ENCODE measurements at regions of chr7 and their contacts with region 1.

Region 1: DNA sequence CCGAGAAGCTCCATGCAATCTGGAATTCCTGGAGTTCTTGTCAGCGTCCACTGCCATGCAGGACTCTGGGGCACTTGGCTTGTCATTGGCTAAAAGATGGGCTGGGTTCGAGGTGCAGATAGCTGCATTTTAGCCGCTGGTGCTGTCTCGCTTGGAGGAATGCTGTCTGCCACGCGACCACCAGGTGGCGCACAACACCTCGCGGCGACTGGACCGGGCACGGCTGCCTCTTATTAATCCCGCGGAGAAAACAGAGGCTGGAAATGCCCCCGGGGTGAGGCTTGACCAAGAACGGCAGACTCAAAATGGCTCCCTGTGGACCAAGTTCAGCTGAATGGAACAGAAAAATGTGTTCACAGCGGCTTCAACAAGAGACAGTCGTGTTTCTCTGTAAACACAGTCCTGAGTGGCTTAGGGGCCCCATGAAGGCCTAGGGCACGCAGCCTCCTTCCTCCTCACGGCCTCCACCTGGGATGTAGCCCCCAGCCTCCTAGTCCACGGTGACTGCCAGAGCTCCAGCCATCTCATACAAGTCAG is 46.2 kb downstream of the AOC1 start:
- DNase-seq: peak; percentile 90
- H3K4me3 ChIP-seq: no peak overlapping the region
- H3K27ac ChIP-seq: peak overlapping the region in 1 of 2 experiments; percentile 34; a peak in 1 of 4 replicates
- H3K4me1 ChIP-seq: peaks cover 2 to 48% of the 10 kb centered on the region in 2 experiments; a peak in 2 of 4 replicates
- H3K27me3 ChIP-seq: no peaks in the 10 kb centered on the region
- CTCF ChIP-seq: peak; percentile 99
- EP300 ChIP-seq: no peak
- RAD21 ChIP-seq: peak; percentile 98

Region 2: DNA sequence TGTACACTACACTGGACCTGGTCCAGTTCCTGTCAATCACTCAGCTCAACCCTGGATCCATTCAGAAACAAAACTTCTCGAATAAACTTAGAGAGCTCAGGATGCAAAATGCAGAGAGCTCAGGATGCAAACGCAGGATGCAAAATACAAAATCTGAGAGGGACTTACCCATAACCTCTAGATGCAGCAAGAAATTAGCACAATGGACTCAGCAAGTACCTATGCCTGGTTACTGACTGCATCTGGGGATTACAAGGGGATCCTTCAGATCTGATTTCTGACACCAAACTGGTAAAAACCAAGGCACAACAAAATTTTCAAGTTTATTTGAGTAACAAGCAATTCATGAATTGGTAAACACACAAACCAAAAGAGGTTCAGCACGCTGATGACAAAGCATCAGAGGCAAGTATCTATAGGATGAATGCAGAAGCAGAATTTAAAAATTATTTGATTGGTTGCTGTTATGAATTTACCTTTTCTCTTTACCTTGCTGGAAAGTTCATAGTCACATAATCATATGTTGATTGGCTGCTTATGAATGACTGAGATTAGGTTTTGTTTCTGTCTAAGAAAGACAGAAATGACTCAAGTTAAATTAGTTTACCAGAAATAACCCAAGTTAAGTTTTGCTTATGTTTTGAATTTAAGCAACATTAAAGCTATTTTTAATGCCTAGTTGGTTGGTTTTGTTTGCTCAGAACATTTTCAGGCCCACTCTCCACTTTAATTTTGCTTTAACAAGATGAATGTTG is 277.7 kb before region 1 on chr7:
- CTCF ChIA-PET with region 1: no interaction called
- POLR2A ChIA-PET with region 1: no interaction called
- DNase-seq: no peak
- H3K4me3 ChIP-seq: no peak overlapping the region
- H3K27ac ChIP-seq: no peak overlapping the region
- H3K4me1 ChIP-seq: no peaks in the 10 kb centered on the region
- H3K27me3 ChIP-seq: 0 out of 2 replicates have a peak, but pooled peaks cover 11% of the 10 kb centered on the region
- CTCF ChIP-seq: no peak
- EP300 ChIP-seq: no peak
- RAD21 ChIP-seq: no peak

Region 3: GRCh38 chr7:150778738-150779301 is 119.7 kb before region 1 on chr7:
- CTCF ChIA-PET with region 1: interaction called, 33 read pairs
- POLR2A ChIA-PET with region 1: no interaction called
- DNase-seq: peak; percentile 78
- H3K4me3 ChIP-seq: no peak overlapping the region; a peak in 1 of 4 replicates
- H3K27ac ChIP-seq: 0 out of 4 replicates have a peak overlapping the region, but pooled peaks of 1 of the 2 experiments have one; percentile 7
- H3K4me1 ChIP-seq: peaks cover 0 to 6% of the 10 kb centered on the region in 2 experiments; a peak in 2 of 4 replicates
- H3K27me3 ChIP-seq: no peaks in the 10 kb centered on the region; the same call in 1 of the 2 replicates
- CTCF ChIP-seq: peak; percentile 99
- EP300 ChIP-seq: no peak
- RAD21 ChIP-seq: peak; percentile 100

Region 4: GRCh38 chr7:150854066-150855000 is 44.2 kb before region 1 on chr7:
- CTCF ChIA-PET with region 1: interaction called, 11 read pairs
- POLR2A ChIA-PET with region 1: no interaction called
- DNase-seq: no peak
- H3K4me3 ChIP-seq: no peak overlapping the region
- H3K27ac ChIP-seq: no peak overlapping the region
- H3K4me1 ChIP-seq: no peaks in the 10 kb centered on the region; a peak in 1 of 4 replicates
- H3K27me3 ChIP-seq: peaks cover 12% of the 10 kb centered on the region; the same call in 1 of the 2 replicates
- CTCF ChIP-seq: no peak
- EP300 ChIP-seq: no peak
- RAD21 ChIP-seq: no peak

Region 5: DNA sequence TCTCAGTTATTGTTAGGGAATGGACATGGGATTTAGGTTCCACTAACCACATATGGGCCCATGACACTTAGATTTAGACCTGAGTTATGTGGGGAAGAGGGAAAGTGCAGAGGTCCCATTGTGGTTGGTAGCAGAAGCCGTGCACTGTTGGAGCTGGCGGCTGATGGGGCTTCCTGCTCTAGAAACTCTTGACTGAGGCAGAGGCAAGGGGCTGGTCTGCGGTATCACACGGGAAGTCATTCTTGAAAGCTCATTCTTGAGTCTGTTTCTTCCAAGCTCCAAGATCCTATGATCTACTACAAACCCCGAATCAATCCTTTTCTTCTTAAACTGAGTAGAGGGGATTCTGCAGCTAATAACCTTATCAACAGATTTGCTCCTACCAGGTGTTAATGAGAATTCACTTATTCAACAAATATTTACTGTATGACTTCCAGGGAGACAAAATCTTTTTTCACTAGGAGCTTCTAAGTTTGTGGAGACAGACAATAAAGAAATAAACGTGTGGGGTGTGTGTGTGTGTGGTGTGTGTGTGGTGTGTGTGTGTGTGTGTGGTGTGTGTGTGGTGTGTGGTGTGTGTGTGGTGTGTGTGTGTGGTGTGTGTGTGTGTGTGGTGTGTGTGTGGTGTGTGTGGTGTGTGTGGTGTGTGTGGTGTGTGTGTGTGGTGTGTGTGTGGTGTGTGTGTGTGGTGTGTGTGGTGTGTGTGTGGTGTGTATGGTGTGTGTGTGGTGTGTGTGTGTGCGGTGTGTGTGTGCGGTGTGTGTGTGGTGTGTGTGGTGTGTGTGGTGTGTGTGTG is 10.9 kb after region 1 on chr7:
- CTCF ChIA-PET with region 1: interaction called, 70 read pairs
- POLR2A ChIA-PET with region 1: no interaction called
- DNase-seq: peak; percentile 21
- H3K4me3 ChIP-seq: no peak overlapping the region
- H3K27ac ChIP-seq: no peak overlapping the region
- H3K4me1 ChIP-seq: peaks cover 0 to under 1% of the 10 kb centered on the region in 2 experiments; a peak in 1 of 4 replicates
- H3K27me3 ChIP-seq: peaks cover 14% of the 10 kb centered on the region
- CTCF ChIP-seq: no peak
- EP300 ChIP-seq: no peak
- RAD21 ChIP-seq: no peak

Region 6: GRCh38 chr7:150941981-150942590 is 43.5 kb after region 1 on chr7:
- CTCF ChIA-PET with region 1: interaction called, 84 read pairs
- POLR2A ChIA-PET with region 1: interaction called, 8 read pairs
- DNase-seq: peak; percentile 71
- H3K4me3 ChIP-seq: no peak overlapping the region
- H3K27ac ChIP-seq: peak overlapping the region in 1 of 2 experiments; percentile 82; a peak in 2 of 4 replicates
- H3K4me1 ChIP-seq: peaks cover 0 to 84% of the 10 kb centered on the region in 2 experiments; a peak in 2 of 4 replicates
- H3K27me3 ChIP-seq: 0 out of 2 replicates have a peak, but pooled peaks cover 11% of the 10 kb centered on the region
- CTCF ChIP-seq: no peak
- EP300 ChIP-seq: 0 out of 4 replicates have a peak, but pooled peaks of 1 of the 2 experiments have one; percentile 17
- RAD21 ChIP-seq: no peak

Region 7: GRCh38 chr7:150974468-150975391 is 76.2 kb after region 1 on chr7:
- CTCF ChIA-PET with region 1: interaction called, 265 read pairs
- POLR2A ChIA-PET with region 1: interaction called, 3 read pairs
- DNase-seq: peak; percentile 82
- H3K4me3 ChIP-seq: peak overlapping the region in 1 of 2 experiments; percentile 37; a peak in 2 of 4 replicates
- H3K27ac ChIP-seq: peak overlapping the region in 1 of 2 experiments; percentile 100; a peak in 3 of 4 replicates
- H3K4me1 ChIP-seq: peaks cover 0 to 90% of the 10 kb centered on the region in 2 experiments; a peak in 2 of 4 replicates
- H3K27me3 ChIP-seq: peaks cover 71% of the 10 kb centered on the region
- CTCF ChIP-seq: peak; percentile 36
- EP300 ChIP-seq: no peak
- RAD21 ChIP-seq: peak; percentile 38; the same call in 1 of the 2 replicates

Region 8: GRCh38 chr7:151008511-151009323 is 110.2 kb after region 1 on chr7:
- CTCF ChIA-PET with region 1: interaction called, 16 read pairs
- POLR2A ChIA-PET with region 1: no interaction called
- DNase-seq: peak; percentile 80
- H3K4me3 ChIP-seq: peak overlapping the region in 1 of 2 experiments; percentile 31; a peak in 1 of 4 replicates
- H3K27ac ChIP-seq: no peak overlapping the region
- H3K4me1 ChIP-seq: peaks cover 0 to 24% of the 10 kb centered on the region in 2 experiments; a peak in 1 of 4 replicates
- H3K27me3 ChIP-seq: 0 out of 2 replicates have a peak, but pooled peaks cover 5% of the 10 kb centered on the region
- CTCF ChIP-seq: peak; percentile 59
- EP300 ChIP-seq: no peak
- RAD21 ChIP-seq: no peak

Region 9: GRCh38 chr7:151034689-151035340 is 136.3 kb after region 1 on chr7:
- CTCF ChIA-PET with region 1: no interaction called
- POLR2A ChIA-PET with region 1: no interaction called
- DNase-seq: no peak
- H3K4me3 ChIP-seq: no peak overlapping the region
- H3K27ac ChIP-seq: no peak overlapping the region
- H3K4me1 ChIP-seq: peaks cover 16 to 23% of the 10 kb centered on the region in 2 experiments
- H3K27me3 ChIP-seq: no peaks in the 10 kb centered on the region
- CTCF ChIP-seq: no peak
- EP300 ChIP-seq: no peak
- RAD21 ChIP-seq: no peak

Region 10: DNA sequence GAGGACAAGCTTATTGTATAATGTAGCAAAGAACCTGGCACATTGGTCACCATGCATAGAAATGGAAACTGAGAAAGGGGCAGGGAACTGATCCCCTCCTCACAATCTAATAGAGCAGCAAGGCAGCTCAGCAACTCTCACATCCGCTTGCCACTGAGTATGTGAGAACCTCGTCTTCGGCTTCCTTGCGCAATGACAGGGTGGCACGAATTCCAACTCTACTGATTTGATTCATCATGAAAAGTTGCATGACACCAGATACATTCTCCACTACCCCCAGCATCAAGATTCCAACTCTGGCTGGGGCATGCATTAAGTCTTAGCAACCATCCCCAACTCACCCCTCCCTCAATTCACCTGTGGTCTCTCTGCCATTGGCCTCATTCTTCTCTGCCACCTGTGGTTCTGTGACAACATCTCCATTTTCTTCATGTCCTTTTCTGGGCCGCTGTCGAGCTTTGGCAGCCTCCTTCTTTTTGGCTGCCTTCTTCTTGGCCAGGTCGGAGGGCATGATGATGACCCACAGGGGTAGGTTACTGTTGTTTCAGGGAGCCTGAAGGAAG is 327.5 kb after region 1 on chr7:
- CTCF ChIA-PET with region 1: no interaction called
- POLR2A ChIA-PET with region 1: no interaction called
- DNase-seq: no peak
- H3K4me3 ChIP-seq: peak overlapping the region; percentile 80 to 97
- H3K27ac ChIP-seq: no peak overlapping the region; a peak in 2 of 4 replicates
- H3K4me1 ChIP-seq: peaks cover 10 to 19% of the 10 kb centered on the region in 2 experiments
- H3K27me3 ChIP-seq: no peaks in the 10 kb centered on the region
- CTCF ChIP-seq: no peak
- EP300 ChIP-seq: no peak
- RAD21 ChIP-seq: no peak

Region 11: GRCh38 chr7:151519765-151520418 is 621.3 kb after region 1 on chr7 and contains the start of gene RHEB:
- CTCF ChIA-PET with region 1: no interaction called
- POLR2A ChIA-PET with region 1: no interaction called
- DNase-seq: peak; percentile 99
- H3K4me3 ChIP-seq: peak within 1 kb of the TSS; percentile 77 to 81
- H3K27ac ChIP-seq: peak within 1 kb of the TSS; percentile 91 to 95
- H3K4me1 ChIP-seq: peaks cover 6 to 19% of the 10 kb centered on the region in 2 experiments; a peak in 2 of 4 replicates
- H3K27me3 ChIP-seq: no peaks in the 10 kb centered on the region
- CTCF ChIP-seq: no peak
- EP300 ChIP-seq: peak in 1 of 2 experiments; percentile 35; a peak in 1 of 4 replicates
- RAD21 ChIP-seq: no peak
- polyA plus RNA-seq, gene RHEB: 87.3 and 90.5 TPM in 2 replicates